Panc1 (cell line): ENCODE measurements at regions of chr7 and their contacts with region 1.

Region 1: DNA sequence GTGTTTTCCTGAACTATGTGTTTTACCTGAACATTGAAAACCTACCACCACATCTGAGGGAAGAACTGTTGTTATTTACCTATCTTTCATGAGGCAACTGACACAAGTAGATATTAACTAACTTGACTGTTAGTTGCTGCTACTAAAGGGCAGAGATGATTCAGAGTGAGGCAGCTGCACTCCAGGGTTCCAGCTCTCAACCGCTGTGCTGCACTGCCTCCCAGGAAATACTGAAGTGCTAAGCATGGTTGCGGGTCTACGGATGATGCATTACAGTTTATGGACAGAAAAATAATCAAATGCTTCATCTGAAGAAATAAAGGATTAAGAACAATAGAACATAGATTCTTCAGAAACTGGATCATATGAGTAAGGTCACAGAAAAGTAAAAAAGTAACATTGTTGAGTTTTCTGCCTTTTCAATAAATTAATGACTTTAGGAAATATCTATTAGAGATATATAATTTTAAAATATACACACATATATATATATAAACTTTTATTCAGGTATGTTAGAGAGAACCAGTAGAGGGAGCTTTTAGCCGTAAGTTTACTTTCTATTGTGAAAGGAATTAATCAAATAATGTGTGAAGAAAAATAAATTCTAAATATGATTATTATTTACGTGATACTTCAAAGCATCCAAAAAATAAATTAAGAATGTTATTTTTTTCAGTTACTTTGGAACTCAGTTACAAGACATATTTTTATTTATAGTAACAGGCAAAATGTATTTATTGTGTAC is 620.0 kb downstream of the CNTNAP2 start:
- DNase-seq: no peak
- ATAC-seq: no peak
- H3K4me3 ChIP-seq: no peak overlapping the region
- H3K27ac ChIP-seq: no peak overlapping the region
- H3K4me1 ChIP-seq: no peaks in the 10 kb centered on the region
- H3K27me3 ChIP-seq: no peaks in the 10 kb centered on the region
- CTCF ChIP-seq: peak; percentile 14; the same call in 1 of the 2 replicates

Region 2: GRCh38 chr7:146720195-146720594 is 16.4 kb before region 1 on chr7:
- CTCF ChIA-PET with region 1: no interaction called
- POLR2A ChIA-PET with region 1: interaction called, 10 read pairs
- in situ Hi-C with region 1: no loop called
- intact Hi-C with region 1: no loop called
- DNase-seq: no peak
- ATAC-seq: no peak
- H3K4me3 ChIP-seq: no peak overlapping the region
- H3K27ac ChIP-seq: no peak overlapping the region
- H3K4me1 ChIP-seq: no peaks in the 10 kb centered on the region
- H3K27me3 ChIP-seq: no peaks in the 10 kb centered on the region
- CTCF ChIP-seq: no peak

Region 3: DNA sequence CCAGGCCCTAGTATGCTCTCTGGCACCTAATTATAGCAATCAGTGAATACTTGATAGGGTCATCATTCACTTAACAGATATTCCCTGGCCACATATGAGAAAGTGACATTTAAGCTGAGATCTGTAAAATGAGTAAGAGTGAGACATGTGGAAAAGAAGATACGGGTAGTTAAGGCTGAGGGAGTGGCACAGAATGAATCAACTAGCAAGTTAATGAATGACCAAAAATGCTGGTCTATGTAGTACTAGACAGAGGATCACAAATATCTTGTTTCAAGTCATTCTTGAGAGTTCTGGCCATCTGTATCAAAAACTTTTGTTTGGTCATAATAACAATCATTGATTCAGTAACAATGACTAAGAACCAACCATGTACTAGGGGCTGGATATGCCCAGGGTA is 334.9 kb after region 1 on chr7:
- CTCF ChIA-PET with region 1: no interaction called
- POLR2A ChIA-PET with region 1: no interaction called
- in situ Hi-C with region 1: no loop called
- intact Hi-C with region 1: no loop called
- DNase-seq: no peak
- ATAC-seq: no peak
- H3K4me3 ChIP-seq: no peak overlapping the region
- H3K27ac ChIP-seq: no peak overlapping the region
- H3K4me1 ChIP-seq: no peaks in the 10 kb centered on the region
- H3K27me3 ChIP-seq: no peaks in the 10 kb centered on the region
- CTCF ChIP-seq: no peak

Region 4: GRCh38 chr7:148084138-148084537 is 1347.5 kb after region 1 on chr7:
- CTCF ChIA-PET with region 1: no interaction called
- POLR2A ChIA-PET with region 1: no interaction called
- in situ Hi-C with region 1: no loop called
- intact Hi-C with region 1: loop called (anchors 10 kb)
- DNase-seq: peak; percentile 25
- ATAC-seq: peak; percentile 78; the same call in 1 of the 2 replicates
- H3K4me3 ChIP-seq: no peak overlapping the region
- H3K27ac ChIP-seq: no peak overlapping the region
- H3K4me1 ChIP-seq: no peaks in the 10 kb centered on the region
- H3K27me3 ChIP-seq: no peaks in the 10 kb centered on the region
- CTCF ChIP-seq: peak; percentile 79